ENCODE measurements at regions of chr17 and their contacts with region 1.

Region 1: DNA sequence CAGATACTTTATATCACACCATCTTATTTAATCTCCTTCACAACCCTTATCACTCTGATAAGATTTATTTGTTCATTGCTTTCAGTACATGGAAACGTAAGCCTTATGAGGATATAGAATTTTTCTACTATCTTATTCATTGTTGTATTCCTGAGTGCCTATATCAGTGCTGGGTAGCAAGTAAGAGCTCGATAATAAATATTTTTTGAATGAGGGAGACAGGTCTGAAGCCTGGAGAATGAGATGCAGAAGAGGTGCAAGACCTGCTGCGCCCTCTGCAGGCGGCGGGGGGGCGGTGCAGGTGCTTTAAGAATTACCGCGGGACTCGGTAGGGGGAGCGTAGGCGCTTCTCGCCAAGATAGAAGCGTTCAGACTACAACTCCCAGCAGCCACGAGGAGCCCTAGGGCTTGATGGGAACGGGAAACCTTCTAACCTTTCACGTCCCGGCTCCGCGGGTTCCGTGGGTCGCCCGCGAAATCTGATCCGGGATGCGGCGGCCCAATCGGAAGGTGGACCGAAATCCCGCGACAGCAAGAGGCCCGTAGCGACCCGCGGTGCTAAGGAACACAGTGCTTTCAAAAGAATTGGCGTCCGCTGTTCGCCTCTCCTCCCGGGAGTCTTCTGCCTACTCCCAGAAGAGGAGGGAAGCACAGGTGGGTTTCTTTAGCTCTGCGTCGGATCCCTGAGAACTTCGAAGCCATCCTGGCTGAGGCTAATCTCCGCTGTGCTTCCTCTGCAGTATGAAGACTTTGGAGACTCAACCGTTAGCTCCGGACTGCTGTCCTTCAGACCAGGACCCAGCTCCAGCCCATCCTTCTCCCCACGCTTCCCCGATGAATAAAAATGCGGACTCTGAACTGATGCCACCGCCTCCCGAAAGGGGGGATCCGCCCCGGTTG is at the start of gene WRAP53:
- DNase-seq: peak; percentile 98
- ATAC-seq: peak; percentile 89
- H3K4me3 Mint-ChIP-seq: peak within 1 kb of the TSS; percentile 88
- H3K27ac Mint-ChIP-seq: peak within 1 kb of the TSS; percentile 100
- H3K4me1 Mint-ChIP-seq: peaks cover 27% of the 10 kb centered on the region
- H3K27me3 Mint-ChIP-seq: no peaks in the 10 kb centered on the region
- CTCF ChIP-seq: peak; percentile 94
- total RNA-seq, gene WRAP53: 35.5 to 37.3 TPM (median 37.2 TPM) in 3 replicates

Region 2: GRCh38 chr17:7329374-7329996 is 358.7 kb before region 1 on chr17:
- CTCF ChIA-PET with region 1: interaction called, 8 read pairs
- POLR2A ChIA-PET with region 1: interaction called, 12 read pairs
- DNase-seq: peak; percentile 98
- ATAC-seq: peak; percentile 73
- H3K4me3 Mint-ChIP-seq: peak overlapping the region; percentile 93
- H3K27ac Mint-ChIP-seq: peak overlapping the region; percentile 100
- H3K4me1 Mint-ChIP-seq: peaks cover 24% of the 10 kb centered on the region
- H3K27me3 Mint-ChIP-seq: no peaks in the 10 kb centered on the region
- CTCF ChIP-seq: no peak

Region 3: GRCh38 chr17:7614422-7615264 is 73.5 kb before region 1 on chr17 and contains the start of gene FXR2:
- CTCF ChIA-PET with region 1: interaction called, 47 read pairs
- POLR2A ChIA-PET with region 1: interaction called, 31 read pairs
- DNase-seq: peak; percentile 100
- ATAC-seq: peak; percentile 96
- H3K4me3 Mint-ChIP-seq: peak within 1 kb of the TSS; percentile 83
- H3K27ac Mint-ChIP-seq: peak within 1 kb of the TSS; percentile 99
- H3K4me1 Mint-ChIP-seq: peaks cover 22% of the 10 kb centered on the region
- H3K27me3 Mint-ChIP-seq: no peaks in the 10 kb centered on the region
- CTCF ChIP-seq: peak; percentile 36; the same call in 1 of the 2 replicates
- total RNA-seq, gene FXR2: 32.5 to 35.1 TPM (median 33.3 TPM) in 3 replicates

Region 4: GRCh38 chr17:7632492-7632894 is 55.7 kb before region 1 on chr17:
- CTCF ChIA-PET with region 1: interaction called, 205 read pairs
- POLR2A ChIA-PET with region 1: interaction called, 68 read pairs
- DNase-seq: peak; percentile 56
- ATAC-seq: peak; percentile 55
- H3K4me3 Mint-ChIP-seq: no peak overlapping the region
- H3K27ac Mint-ChIP-seq: no peak overlapping the region
- H3K4me1 Mint-ChIP-seq: peaks cover 35% of the 10 kb centered on the region
- H3K27me3 Mint-ChIP-seq: no peaks in the 10 kb centered on the region
- CTCF ChIP-seq: peak; percentile 28; the same call in 1 of the 2 replicates

Region 5: DNA sequence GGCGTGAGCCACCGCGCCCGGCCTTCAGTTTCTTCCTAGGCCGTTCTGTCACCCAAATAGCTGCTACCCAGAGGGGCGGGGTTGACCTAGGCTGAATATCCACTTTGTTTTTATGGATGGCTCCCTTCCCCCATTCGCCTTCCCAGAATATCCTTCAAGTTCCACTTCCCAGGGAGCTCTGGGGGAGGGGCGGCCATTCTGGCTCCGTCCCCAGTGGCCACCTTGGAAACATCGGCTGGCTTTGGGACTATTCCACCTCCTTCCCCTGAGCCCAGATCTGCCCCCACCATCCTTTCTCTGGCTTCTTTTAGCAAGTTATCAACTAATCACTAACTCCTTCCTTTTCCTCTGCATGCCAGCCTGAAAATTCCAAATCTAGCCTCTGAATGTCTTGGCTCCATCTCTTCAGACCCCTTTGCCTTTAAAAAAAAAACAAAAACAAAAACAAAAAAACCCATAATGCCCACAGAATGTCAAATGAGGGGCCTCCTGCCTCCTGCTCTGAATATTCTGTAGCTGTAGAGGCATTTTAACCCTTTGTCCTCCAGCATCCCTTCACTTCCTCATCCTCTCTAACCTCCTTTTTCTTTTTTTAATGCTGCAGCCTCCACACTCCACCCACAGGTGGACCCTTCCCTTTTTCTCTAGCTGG is 31.1 kb before region 1 on chr17:
- CTCF ChIA-PET with region 1: interaction called, 69 read pairs
- POLR2A ChIA-PET with region 1: interaction called, 80 read pairs
- DNase-seq: peak; percentile 94
- ATAC-seq: peak; percentile 91
- H3K4me3 Mint-ChIP-seq: peak overlapping the region; percentile 53
- H3K27ac Mint-ChIP-seq: peak overlapping the region; percentile 97
- H3K4me1 Mint-ChIP-seq: peaks cover 47% of the 10 kb centered on the region
- H3K27me3 Mint-ChIP-seq: peaks cover 14% of the 10 kb centered on the region
- CTCF ChIP-seq: no peak

Region 6: GRCh38 chr17:7716901-7717755 is 29.0 kb after region 1 on chr17 and contains the start of gene DNAH2:
- CTCF ChIA-PET with region 1: interaction called, 120 read pairs
- POLR2A ChIA-PET with region 1: interaction called, 18 read pairs
- DNase-seq: peak; percentile 96
- ATAC-seq: peak; percentile 88
- H3K4me3 Mint-ChIP-seq: peak within 1 kb of the TSS; percentile 83
- H3K27ac Mint-ChIP-seq: peak within 1 kb of the TSS; percentile 72; the same call in 1 of the 2 replicates
- H3K4me1 Mint-ChIP-seq: peaks cover 36% of the 10 kb centered on the region
- H3K27me3 Mint-ChIP-seq: peaks cover 47% of the 10 kb centered on the region
- CTCF ChIP-seq: no peak
- total RNA-seq, gene DNAH2: 0.17 to 0.34 TPM (median 0.27 TPM) in 3 replicates